ENCODE measurements at regions of chr4 and their contacts with region 1.

Region 1: DNA sequence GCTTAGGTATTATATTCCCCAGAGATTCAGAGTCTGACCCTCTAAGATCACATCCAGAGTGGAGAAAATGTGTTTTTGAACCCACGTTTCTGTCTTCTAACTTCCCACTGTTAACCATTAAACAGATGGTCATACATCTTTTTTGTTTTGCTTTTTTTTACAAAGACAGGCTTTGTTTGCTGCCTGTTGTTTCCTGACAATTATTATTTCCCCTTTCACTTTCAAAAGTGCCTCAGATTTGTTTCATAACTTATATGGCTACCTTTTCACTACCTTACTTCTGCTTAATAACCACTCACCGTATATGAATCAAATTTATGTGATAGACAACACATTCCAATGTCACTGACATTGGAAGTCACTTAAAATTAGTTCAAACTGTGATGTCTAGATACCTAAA is 142.2 kb downstream of the HS3ST1 start:
- DNase-seq: no peak
- ATAC-seq: no peak
- H3K4me3 ChIP-seq: no peak overlapping the region
- H3K4me3 Mint-ChIP-seq: no peak overlapping the region
- H3K27ac ChIP-seq: no peak overlapping the region
- H3K27ac Mint-ChIP-seq: no peak overlapping the region
- H3K4me1 ChIP-seq: no peaks in the 10 kb centered on the region
- H3K4me1 Mint-ChIP-seq: peaks cover 0 to 2% (median 0%) of the 10 kb centered on the region in 3 donors
- H3K27me3 ChIP-seq: no peaks in the 10 kb centered on the region
- H3K27me3 Mint-ChIP-seq: no peaks in the 10 kb centered on the region

Region 2: GRCh38 chr4:11301075-11301640 is 14.6 kb after region 1 on chr4:
- CTCF ChIA-PET with region 1: no interaction called
- POLR2A ChIA-PET with region 1: interaction called in 1 of 2 experiments, 18 read pairs
- DNase-seq: no peak
- ATAC-seq: no peak
- H3K4me3 ChIP-seq: no peak overlapping the region
- H3K4me3 Mint-ChIP-seq: no peak overlapping the region
- H3K27ac ChIP-seq: no peak overlapping the region
- H3K27ac Mint-ChIP-seq: no peak overlapping the region
- H3K4me1 ChIP-seq: no peaks in the 10 kb centered on the region
- H3K4me1 Mint-ChIP-seq: peaks cover 0 to 2% (median 0%) of the 10 kb centered on the region in 3 donors
- H3K27me3 ChIP-seq: no peaks in the 10 kb centered on the region
- H3K27me3 Mint-ChIP-seq: peaks cover 6 to 8% of the 10 kb centered on the region in 2 donors

Measured in T-cell (primary cell).